ENCODE measurements at regions of chr15 and their contacts with region 1.

Region 1: GRCh38 chr15:45402162-45402954 is 24.0 kb upstream of the GATM start:
- DNase-seq: peak; percentile 94 to 99 (median 96)
- ATAC-seq: peak; percentile 93
- H3K4me3 ChIP-seq: peak overlapping the region; percentile 48 to 75
- H3K4me3 Mint-ChIP-seq: peak overlapping the region; percentile 93
- H3K27ac ChIP-seq: peak overlapping the region; percentile 75 to 86
- H3K27ac Mint-ChIP-seq: peak overlapping the region; percentile 96
- H3K4me1 ChIP-seq: peaks cover 22% of the 10 kb centered on the region
- H3K4me1 Mint-ChIP-seq: peaks cover 42% of the 10 kb centered on the region
- H3K27me3 ChIP-seq: no peaks in the 10 kb centered on the region
- H3K27me3 Mint-ChIP-seq: no peaks in the 10 kb centered on the region
- CTCF ChIP-seq: no peak

Region 2: GRCh38 chr15:44286814-44287452 is 1115.4 kb before region 1 on chr15:
- CTCF ChIA-PET with region 1: no interaction called
- POLR2A ChIA-PET with region 1: no interaction called
- intact Hi-C with region 1: loop called in 1 of 2 experiments (anchors 5 kb)
- DNase-seq: peak in 2 of 9 experiments; percentile 7 to 36
- ATAC-seq: no peak
- H3K4me3 ChIP-seq: peak overlapping the region; percentile 77 to 91
- H3K4me3 Mint-ChIP-seq: peak overlapping the region; percentile 94
- H3K27ac ChIP-seq: peak overlapping the region; percentile 95 to 97
- H3K27ac Mint-ChIP-seq: peak overlapping the region; percentile 98
- H3K4me1 ChIP-seq: peaks cover 26% of the 10 kb centered on the region
- H3K4me1 Mint-ChIP-seq: peaks cover 42% of the 10 kb centered on the region
- H3K27me3 ChIP-seq: no peaks in the 10 kb centered on the region
- H3K27me3 Mint-ChIP-seq: peaks cover 2% of the 10 kb centered on the region
- CTCF ChIP-seq: peak; percentile 36

Region 3: GRCh38 chr15:44753345-44753744 is 649.0 kb before region 1 on chr15:
- CTCF ChIA-PET with region 1: no interaction called
- POLR2A ChIA-PET with region 1: no interaction called
- intact Hi-C with region 1: no loop called
- DNase-seq: no peak
- ATAC-seq: no peak
- H3K4me3 ChIP-seq: no peak overlapping the region
- H3K4me3 Mint-ChIP-seq: no peak overlapping the region
- H3K27ac ChIP-seq: no peak overlapping the region
- H3K27ac Mint-ChIP-seq: no peak overlapping the region
- H3K4me1 ChIP-seq: no peaks in the 10 kb centered on the region
- H3K4me1 Mint-ChIP-seq: peaks cover 3% of the 10 kb centered on the region
- H3K27me3 ChIP-seq: no peaks in the 10 kb centered on the region
- H3K27me3 Mint-ChIP-seq: no peaks in the 10 kb centered on the region
- CTCF ChIP-seq: no peak

Region 4: DNA sequence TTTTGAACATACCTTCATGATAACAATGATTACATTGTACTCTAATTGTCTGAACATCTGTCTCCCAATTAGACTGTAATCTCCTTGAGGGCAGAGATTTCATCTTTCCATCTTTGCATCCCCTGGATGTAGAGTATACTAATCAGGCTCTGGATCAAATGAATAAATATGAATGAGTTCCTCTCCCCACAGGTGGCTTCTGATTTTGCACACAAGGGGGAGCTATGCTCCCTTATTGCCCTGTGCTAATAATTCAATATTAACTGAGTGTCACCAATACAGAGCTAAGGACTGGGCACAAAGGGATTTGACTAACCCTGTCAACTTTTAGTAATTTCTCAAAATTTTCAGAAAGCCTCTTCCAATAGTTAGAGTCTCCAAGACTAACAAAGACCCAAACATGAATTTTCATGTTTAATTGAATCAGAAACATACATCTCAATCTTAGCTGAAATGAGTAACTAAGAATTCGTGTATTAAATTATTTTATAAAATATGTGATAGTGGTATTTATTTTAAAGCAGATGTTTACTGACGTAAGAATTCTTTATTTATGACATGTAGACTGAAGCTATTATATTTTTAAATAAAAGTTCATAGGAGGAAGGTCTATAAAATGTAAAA is 275.7 kb before region 1 on chr15:
- CTCF ChIA-PET with region 1: interaction called, 21 read pairs
- POLR2A ChIA-PET with region 1: no interaction called
- intact Hi-C with region 1: loop called (anchors 1 to 2 kb)
- DNase-seq: peak in 5 of 9 experiments; percentile 36 to 68 (median 52)
- ATAC-seq: peak; percentile 60
- H3K4me3 ChIP-seq: no peak overlapping the region
- H3K4me3 Mint-ChIP-seq: no peak overlapping the region
- H3K27ac ChIP-seq: no peak overlapping the region
- H3K27ac Mint-ChIP-seq: no peak overlapping the region
- H3K4me1 ChIP-seq: no peaks in the 10 kb centered on the region
- H3K4me1 Mint-ChIP-seq: peaks cover 5% of the 10 kb centered on the region
- H3K27me3 ChIP-seq: peaks cover 9 to 28% of the 10 kb centered on the region in 2 experiments
- H3K27me3 Mint-ChIP-seq: peaks cover 64% of the 10 kb centered on the region
- CTCF ChIP-seq: peak; percentile 59

Region 5: DNA sequence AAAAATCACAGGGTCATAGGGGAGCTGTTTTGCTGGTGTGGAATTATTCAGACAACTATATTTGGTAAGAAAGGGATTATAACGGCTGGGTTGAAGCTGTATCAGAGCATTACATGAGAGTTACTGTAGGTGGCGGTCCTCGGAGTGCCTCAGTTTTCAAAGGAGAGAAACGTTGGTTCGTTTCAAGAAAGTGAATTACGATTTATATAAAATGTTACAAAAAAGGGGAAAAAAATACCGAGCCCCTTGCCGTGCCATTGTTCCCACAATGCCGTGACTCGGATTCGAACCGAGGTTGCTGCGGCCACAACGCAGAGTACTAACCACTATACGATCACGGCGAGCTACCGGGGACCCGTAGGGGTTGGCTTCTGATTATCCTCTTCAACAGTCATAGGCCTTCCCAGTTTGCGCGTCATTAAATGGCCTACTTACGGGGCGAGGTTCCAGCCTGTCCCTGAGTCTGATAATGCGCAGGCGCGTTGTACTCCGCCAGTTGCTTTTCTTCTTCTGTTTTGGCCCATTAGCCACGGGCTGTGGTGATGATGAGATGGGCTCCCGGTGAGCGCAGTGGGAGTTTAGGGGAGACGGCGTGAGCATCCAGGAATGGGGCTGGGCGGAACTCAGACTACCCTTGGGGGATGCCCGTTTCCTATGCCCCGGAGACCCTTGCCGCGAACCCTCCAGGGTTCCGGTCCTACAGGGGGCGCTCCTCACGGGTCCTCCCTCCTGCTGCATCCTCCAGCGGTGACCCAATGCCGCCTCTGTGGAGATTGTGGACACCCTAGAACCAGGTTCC is 203.8 kb before region 1 on chr15:
- CTCF ChIA-PET with region 1: interaction called, 17 read pairs
- POLR2A ChIA-PET with region 1: interaction called, 41 read pairs
- intact Hi-C with region 1: loop called (anchors 1 to 2 kb)
- DNase-seq: peak; percentile 90 to 99 (median 93)
- ATAC-seq: peak; percentile 61
- H3K4me3 ChIP-seq: peak overlapping the region; percentile 82 to 88
- H3K4me3 Mint-ChIP-seq: no peak overlapping the region
- H3K27ac ChIP-seq: peak overlapping the region; percentile 92 to 96
- H3K27ac Mint-ChIP-seq: no peak overlapping the region
- H3K4me1 ChIP-seq: peaks cover 11% of the 10 kb centered on the region
- H3K4me1 Mint-ChIP-seq: peaks cover 13% of the 10 kb centered on the region
- H3K27me3 ChIP-seq: no peaks in the 10 kb centered on the region
- H3K27me3 Mint-ChIP-seq: no peaks in the 10 kb centered on the region
- CTCF ChIP-seq: peak; percentile 54

Region 6: DNA sequence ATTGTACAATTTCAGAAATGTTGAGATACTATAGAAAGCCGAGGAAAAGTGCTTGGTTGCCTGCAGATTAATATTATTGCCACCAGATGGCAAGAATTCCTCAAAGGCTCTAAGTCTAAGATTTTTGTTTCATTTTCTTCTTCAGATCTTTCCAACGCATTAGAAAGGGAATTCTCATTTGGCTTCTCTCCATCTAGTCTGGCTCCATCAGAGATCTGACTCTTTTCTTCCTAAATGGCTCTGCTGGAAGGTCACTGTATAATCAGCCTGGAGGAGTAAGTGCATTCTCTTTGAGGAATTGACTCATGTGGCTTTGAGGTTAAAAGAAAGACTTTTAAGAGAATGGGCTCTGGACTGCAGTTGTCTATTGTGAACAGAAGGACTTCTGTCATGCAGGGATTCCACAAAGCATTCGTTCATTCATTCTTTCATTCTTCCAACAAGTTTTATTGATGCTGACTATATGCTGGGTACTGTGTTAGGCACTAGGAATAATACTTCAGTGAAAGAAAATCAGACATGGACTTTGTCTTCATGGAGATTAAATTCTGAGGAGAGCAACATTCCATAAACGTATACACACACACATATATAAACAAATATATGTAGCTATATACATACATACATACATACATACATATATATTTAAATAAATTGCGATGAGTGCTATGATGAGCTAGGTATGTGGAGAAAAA is 95.0 kb before region 1 on chr15:
- CTCF ChIA-PET with region 1: interaction called, 7 read pairs
- POLR2A ChIA-PET with region 1: no interaction called
- intact Hi-C with region 1: loop called (anchors 1 to 2 kb)
- DNase-seq: peak in 2 of 9 experiments; percentile 30 to 44
- ATAC-seq: no peak
- H3K4me3 ChIP-seq: peak overlapping the region; percentile 15 to 24
- H3K4me3 Mint-ChIP-seq: peak overlapping the region; percentile 57
- H3K27ac ChIP-seq: no peak overlapping the region
- H3K27ac Mint-ChIP-seq: no peak overlapping the region
- H3K4me1 ChIP-seq: no peaks in the 10 kb centered on the region
- H3K4me1 Mint-ChIP-seq: peaks cover 4% of the 10 kb centered on the region
- H3K27me3 ChIP-seq: no peaks in the 10 kb centered on the region
- H3K27me3 Mint-ChIP-seq: peaks cover 29% of the 10 kb centered on the region
- CTCF ChIP-seq: no peak

Region 7: DNA sequence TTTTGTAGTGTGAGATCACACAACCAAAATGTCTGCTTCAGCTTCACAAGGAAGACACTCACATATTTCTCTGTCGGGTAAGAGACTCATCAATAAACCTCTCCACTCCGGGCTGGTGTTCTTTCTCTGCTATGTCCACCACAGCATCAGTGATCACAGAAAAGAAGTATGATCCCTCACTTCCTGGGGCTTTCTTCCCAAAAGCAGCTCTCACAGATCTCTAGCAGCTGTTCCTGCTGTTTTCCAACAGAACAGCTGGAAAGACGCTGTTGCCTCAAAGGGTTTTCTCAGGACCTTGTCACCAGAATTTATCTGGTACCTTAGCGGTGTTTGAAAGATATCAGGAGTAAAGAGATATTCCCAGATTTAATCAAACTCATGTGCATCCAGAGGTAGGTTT is 70.4 kb before region 1 on chr15:
- CTCF ChIA-PET with region 1: no interaction called
- POLR2A ChIA-PET with region 1: no interaction called
- intact Hi-C with region 1: no loop called
- DNase-seq: no peak
- ATAC-seq: no peak
- H3K4me3 ChIP-seq: no peak overlapping the region
- H3K4me3 Mint-ChIP-seq: no peak overlapping the region
- H3K27ac ChIP-seq: no peak overlapping the region
- H3K27ac Mint-ChIP-seq: no peak overlapping the region
- H3K4me1 ChIP-seq: no peaks in the 10 kb centered on the region
- H3K4me1 Mint-ChIP-seq: peaks cover 4% of the 10 kb centered on the region
- H3K27me3 ChIP-seq: no peaks in the 10 kb centered on the region
- H3K27me3 Mint-ChIP-seq: peaks cover 14% of the 10 kb centered on the region
- CTCF ChIP-seq: no peak

Region 8: DNA sequence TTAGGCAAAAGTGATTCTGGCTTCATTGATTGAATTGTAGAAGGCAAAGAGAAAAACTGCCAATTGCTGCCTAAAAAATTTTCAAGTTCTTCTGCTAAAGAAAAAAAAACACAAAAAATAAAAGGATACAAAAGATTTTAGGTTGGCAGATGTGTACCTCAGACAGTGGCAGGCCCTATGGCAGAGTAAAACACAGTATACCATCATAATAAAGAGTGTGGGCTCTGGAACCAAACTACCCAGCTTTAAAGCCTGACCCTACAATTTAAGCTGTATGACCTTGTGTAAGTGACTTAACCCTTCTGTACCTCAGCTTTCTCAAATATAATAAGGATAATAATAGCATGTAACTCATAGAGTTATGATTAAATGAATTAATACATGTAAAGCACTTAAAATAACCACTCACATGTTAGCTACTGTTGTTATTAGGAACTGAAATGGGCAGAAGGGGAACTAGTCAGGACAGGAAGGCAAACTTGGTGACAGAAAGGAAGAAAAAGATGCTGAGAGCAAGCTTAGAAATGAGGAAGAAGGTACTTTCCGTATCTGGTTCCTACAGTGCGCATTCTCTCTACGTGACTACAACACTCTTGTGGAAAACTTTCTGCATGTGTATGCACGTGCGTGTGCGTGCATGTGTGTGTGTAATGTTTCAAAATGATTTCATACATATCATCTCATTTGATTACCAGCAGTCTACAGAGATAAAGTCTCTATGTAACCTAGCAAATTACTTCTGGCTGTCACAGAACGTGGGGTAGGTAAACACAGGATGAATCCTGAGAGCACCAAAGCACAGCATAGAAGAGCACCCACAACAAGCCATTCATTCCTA is 10.4 kb before region 1 on chr15:
- CTCF ChIA-PET with region 1: interaction called, 15 read pairs
- POLR2A ChIA-PET with region 1: interaction called, 8 read pairs
- intact Hi-C with region 1: no loop called
- DNase-seq: peak in 1 of 9 experiments; percentile 40
- ATAC-seq: no peak
- H3K4me3 ChIP-seq: no peak overlapping the region
- H3K4me3 Mint-ChIP-seq: no peak overlapping the region
- H3K27ac ChIP-seq: no peak overlapping the region
- H3K27ac Mint-ChIP-seq: no peak overlapping the region
- H3K4me1 ChIP-seq: no peaks in the 10 kb centered on the region
- H3K4me1 Mint-ChIP-seq: no peaks in the 10 kb centered on the region
- H3K27me3 ChIP-seq: peaks cover 0 to 3% of the 10 kb centered on the region in 2 experiments
- H3K27me3 Mint-ChIP-seq: peaks cover 25% of the 10 kb centered on the region
- CTCF ChIP-seq: no peak

Region 9: GRCh38 chr15:45481135-45481534 is 78.8 kb after region 1 on chr15:
- CTCF ChIA-PET with region 1: no interaction called
- POLR2A ChIA-PET with region 1: no interaction called
- intact Hi-C with region 1: no loop called
- DNase-seq: no peak
- ATAC-seq: no peak
- H3K4me3 ChIP-seq: no peak overlapping the region
- H3K4me3 Mint-ChIP-seq: no peak overlapping the region
- H3K27ac ChIP-seq: no peak overlapping the region
- H3K27ac Mint-ChIP-seq: no peak overlapping the region
- H3K4me1 ChIP-seq: no peaks in the 10 kb centered on the region
- H3K4me1 Mint-ChIP-seq: no peaks in the 10 kb centered on the region
- H3K27me3 ChIP-seq: no peaks in the 10 kb centered on the region
- H3K27me3 Mint-ChIP-seq: no peaks in the 10 kb centered on the region
- CTCF ChIP-seq: no peak

Region 10: DNA sequence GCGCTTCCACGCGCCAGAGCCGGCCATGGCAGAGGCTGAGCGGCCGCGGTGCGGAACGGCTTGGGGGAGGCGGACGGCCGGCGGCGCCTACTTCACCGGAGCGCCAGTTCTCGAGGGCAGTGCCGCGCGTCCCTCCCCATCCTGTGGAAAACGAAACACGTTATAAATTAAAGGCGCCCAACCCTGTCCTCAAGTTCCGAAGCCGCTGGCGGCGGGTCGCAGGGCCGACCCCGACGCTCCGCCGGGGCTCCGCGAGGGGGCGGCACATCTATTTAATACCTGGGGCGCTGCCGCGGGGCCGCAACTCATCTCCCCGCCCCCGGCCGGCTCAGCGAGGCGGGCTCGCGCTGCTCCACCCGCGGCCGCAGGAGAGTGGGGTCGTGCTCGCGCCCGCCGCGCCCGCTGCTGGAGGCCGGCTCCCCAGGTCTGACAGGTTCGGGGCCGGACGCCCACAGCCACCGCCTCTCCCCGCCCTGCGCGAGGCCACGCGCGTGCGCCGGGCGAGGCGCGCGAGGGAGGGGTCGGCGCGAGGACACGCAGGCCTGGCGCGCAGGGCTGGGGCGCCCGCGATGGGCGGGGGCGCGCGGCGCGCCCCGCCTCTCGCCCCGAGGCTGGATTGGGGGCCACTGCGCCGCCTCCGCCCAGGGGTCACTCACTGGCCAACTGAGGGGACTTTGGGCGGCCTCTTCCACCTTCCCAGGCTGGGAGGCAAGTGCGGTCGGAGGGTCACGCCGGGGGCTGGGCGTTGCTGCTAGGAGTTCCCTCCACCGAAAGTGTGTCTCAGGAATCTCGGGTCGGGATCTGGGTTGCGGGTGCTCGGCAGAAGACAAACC is 120.2 kb after region 1 on chr15 and contains the start of gene SLC30A4:
- CTCF ChIA-PET with region 1: no interaction called
- POLR2A ChIA-PET with region 1: interaction called, 5 read pairs
- intact Hi-C with region 1: loop called (anchors 10 kb)
- DNase-seq: peak; percentile 16 to 87 (median 66)
- ATAC-seq: peak; percentile 85
- H3K4me3 ChIP-seq: peak within 1 kb of the TSS; percentile 71 to 85
- H3K4me3 Mint-ChIP-seq: peak within 1 kb of the TSS; percentile 94
- H3K27ac ChIP-seq: peak within 1 kb of the TSS; percentile 31 to 63
- H3K27ac Mint-ChIP-seq: peak within 1 kb of the TSS; percentile 88
- H3K4me1 ChIP-seq: peaks cover 10% of the 10 kb centered on the region
- H3K4me1 Mint-ChIP-seq: peaks cover 32% of the 10 kb centered on the region
- H3K27me3 ChIP-seq: no peaks in the 10 kb centered on the region
- H3K27me3 Mint-ChIP-seq: no peaks in the 10 kb centered on the region
- CTCF ChIP-seq: peak; percentile 67
- total RNA-seq, gene SLC30A4: 1.8 to 2.0 TPM